Activated B cell treated with CpG ODN at 0.5 μM for 24 hours (primary cell): ENCODE measurements at regions of chr4 and their contacts with region 1.

Region 1: DNA sequence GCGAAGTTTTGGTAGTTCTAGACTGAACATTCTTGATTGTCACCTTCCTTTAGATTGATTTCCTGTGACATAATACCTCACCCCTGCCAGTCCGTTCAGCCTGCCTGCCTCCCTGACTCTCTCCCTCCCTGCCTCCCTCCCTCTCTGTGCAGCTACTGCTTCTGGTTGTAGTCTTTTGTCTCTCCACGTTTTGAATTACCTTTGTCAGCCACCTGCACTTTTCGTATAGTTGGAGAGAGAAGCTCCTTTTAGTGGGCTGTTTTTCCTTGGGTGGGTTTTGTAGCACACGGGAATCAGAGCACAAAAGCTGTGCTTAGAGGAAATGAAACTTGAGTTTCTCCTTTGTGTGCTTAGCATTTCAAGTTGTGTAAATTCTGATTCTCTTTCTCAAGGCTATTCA is 32.6 kb upstream of the MSMO1 start:
- DNase-seq: no peak
- ATAC-seq: peak; percentile 93
- H3K4me3 Mint-ChIP-seq: peak overlapping the region; percentile 82
- H3K27ac Mint-ChIP-seq: peak overlapping the region; percentile 91
- H3K4me1 Mint-ChIP-seq: peaks cover 34% of the 10 kb centered on the region
- H3K27me3 Mint-ChIP-seq: no peaks in the 10 kb centered on the region
- CTCF ChIP-seq: no peak

Region 2: DNA sequence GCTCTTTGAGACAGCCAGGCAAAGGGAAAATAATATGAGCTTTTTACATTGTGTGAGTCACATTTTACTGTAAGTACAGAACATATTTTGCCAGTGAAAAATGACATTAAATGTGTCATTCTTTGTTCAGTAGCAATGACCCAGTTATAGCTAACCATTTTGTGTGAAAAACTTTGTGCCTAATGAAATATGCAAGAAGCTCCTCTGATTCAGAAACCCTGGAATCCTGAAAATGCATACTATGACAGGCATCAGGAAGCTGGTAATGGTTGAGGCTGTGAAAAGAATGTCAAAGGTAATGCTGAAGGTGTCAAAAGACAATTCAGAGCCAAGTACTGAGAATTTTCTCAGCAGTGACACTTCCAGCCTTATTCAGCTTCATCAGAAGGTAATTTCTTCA is 1090.5 kb before region 1 on chr4:
- CTCF ChIA-PET with region 1: no interaction called
- POLR2A ChIA-PET with region 1: no interaction called
- intact Hi-C with region 1: no loop called
- DNase-seq: no peak
- ATAC-seq: no peak
- H3K4me3 Mint-ChIP-seq: no peak overlapping the region
- H3K27ac Mint-ChIP-seq: no peak overlapping the region
- H3K4me1 Mint-ChIP-seq: no peaks in the 10 kb centered on the region
- H3K27me3 Mint-ChIP-seq: no peaks in the 10 kb centered on the region
- CTCF ChIP-seq: no peak

Region 3: DNA sequence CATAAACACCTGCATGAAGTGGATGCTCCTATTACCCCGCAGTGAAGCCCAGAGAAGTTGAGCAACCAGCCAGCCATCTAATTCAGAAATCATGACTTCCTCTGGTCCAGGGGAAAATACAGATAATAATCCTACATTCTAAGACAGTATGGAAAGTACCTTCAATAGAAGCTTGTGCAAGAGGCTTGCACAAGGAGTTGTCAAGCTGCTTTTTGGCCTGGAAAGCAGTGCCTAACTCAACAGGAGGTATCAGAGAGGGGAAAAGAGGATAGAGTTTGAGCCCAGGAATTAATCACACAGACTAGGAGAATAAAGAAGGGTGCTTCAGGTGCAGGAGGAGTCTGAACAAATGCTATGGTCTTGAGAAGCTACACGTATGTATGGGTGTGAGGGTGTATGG is 209.0 kb before region 1 on chr4:
- CTCF ChIA-PET with region 1: no interaction called
- POLR2A ChIA-PET with region 1: no interaction called
- intact Hi-C with region 1: no loop called
- DNase-seq: no peak
- ATAC-seq: no peak
- H3K4me3 Mint-ChIP-seq: no peak overlapping the region
- H3K27ac Mint-ChIP-seq: no peak overlapping the region
- H3K4me1 Mint-ChIP-seq: no peaks in the 10 kb centered on the region
- H3K27me3 Mint-ChIP-seq: no peaks in the 10 kb centered on the region
- CTCF ChIP-seq: no peak

Region 4: GRCh38 chr4:165207431-165208220 is 87.3 kb before region 1 on chr4 and contains the start of gene KLHL2:
- CTCF ChIA-PET with region 1: no interaction called
- POLR2A ChIA-PET with region 1: no interaction called
- intact Hi-C with region 1: loop called (anchors 1 kb)
- DNase-seq: peak; percentile 76
- ATAC-seq: peak; percentile 90
- H3K4me3 Mint-ChIP-seq: peak within 1 kb of the TSS; percentile 94
- H3K27ac Mint-ChIP-seq: peak within 1 kb of the TSS; percentile 91
- H3K4me1 Mint-ChIP-seq: peaks cover 73% of the 10 kb centered on the region
- H3K27me3 Mint-ChIP-seq: no peaks in the 10 kb centered on the region
- CTCF ChIP-seq: no peak
- total RNA-seq, gene KLHL2: 21.5 and 21.9 TPM in 2 replicates

Region 5: DNA sequence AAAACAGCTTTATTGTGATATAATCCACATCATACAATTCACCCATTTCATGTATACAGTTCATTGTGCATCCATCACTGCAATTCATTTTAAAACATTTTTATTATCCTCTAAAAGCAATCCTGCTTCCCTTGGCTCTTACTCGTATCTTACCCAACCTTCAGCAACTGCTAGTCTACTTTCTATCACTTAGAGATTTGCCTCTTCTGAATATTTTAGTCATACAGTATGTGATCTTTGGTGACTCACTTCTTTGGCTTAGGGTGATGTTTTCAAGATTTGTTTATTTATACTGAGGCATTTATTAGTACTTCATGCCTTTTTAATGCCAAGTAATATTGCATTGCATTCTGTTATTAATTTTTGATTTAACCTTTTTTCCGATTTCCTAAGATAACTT is 17.6 kb after region 1 on chr4:
- CTCF ChIA-PET with region 1: no interaction called
- POLR2A ChIA-PET with region 1: no interaction called
- intact Hi-C with region 1: loop called (anchors 2 kb)
- DNase-seq: no peak
- ATAC-seq: no peak
- H3K4me3 Mint-ChIP-seq: no peak overlapping the region
- H3K27ac Mint-ChIP-seq: no peak overlapping the region
- H3K4me1 Mint-ChIP-seq: no peaks in the 10 kb centered on the region
- H3K27me3 Mint-ChIP-seq: no peaks in the 10 kb centered on the region
- CTCF ChIP-seq: no peak

Region 6: DNA sequence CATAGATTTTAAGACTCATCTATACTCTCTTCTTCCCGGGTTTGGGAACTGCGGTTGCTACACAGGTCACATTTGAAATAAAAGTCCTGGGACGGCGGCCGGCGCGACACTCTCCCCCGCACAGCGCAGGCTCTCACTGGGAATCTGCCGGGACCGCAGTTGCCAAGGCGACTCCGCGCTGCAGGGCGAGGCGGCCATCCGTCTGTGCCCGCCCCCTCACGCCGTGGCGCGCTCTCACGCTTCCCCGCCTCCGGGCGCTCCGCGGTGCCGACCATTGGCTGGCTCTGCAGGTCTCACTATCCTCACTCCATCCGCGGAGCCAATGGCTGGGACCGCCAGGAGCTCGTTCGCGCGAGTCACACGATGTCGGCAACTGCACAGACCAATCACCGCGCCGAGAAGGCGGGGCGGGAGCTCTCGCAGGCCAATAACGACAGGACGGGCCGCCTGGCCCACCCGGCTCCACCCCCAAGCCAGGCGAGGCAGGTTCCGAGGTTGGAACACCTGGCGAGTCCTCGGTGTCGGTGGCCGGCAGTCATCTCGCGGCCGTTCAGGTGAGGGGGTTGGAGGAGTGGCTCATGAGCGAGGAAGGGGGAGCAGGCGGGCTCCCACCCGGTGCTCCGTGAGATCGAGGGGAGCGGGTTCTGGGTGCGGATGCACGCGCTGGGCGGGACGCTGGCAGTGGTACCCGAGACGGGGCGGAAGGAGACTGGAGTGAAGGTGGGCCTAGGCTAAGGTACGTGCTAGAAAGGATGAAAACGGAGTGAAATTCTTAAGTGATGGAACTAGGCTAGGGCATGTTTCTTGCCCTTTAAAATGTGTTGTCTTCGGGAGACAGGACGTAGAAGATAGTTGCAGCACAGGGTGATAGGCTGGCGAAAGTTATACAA is 32.5 kb after region 1 on chr4 and contains the start of gene MSMO1:
- CTCF ChIA-PET with region 1: no interaction called
- POLR2A ChIA-PET with region 1: interaction called, 6 read pairs
- intact Hi-C with region 1: loop called (anchors 2 kb)
- DNase-seq: peak; percentile 92
- ATAC-seq: peak; percentile 96
- H3K4me3 Mint-ChIP-seq: no peak within 1 kb of the TSS
- H3K27ac Mint-ChIP-seq: no peak within 1 kb of the TSS
- H3K4me1 Mint-ChIP-seq: peaks cover 40% of the 10 kb centered on the region
- H3K27me3 Mint-ChIP-seq: no peaks in the 10 kb centered on the region
- CTCF ChIP-seq: no peak
- total RNA-seq, gene MSMO1: 74.6 and 87.9 TPM in 2 replicates

Region 7: DNA sequence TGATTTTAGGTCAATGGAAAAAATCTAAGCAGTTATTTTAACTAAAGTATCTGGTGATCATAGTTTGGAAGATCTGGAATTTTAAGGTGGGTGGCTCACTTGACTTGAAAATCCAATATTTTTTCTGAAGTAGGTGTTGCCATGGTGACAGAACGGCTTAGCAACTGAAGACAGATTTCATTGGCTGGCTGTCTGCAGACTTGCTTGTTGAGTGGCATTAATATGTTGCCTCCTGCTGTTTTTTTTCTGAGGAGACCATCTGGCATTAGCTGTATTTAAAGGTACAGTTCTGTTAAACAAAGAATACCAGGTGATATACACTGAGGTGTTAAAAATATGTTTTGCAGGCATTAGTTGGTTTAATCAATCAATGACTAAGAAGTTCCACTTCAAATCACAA is 103.7 kb after region 1 on chr4:
- CTCF ChIA-PET with region 1: no interaction called
- POLR2A ChIA-PET with region 1: no interaction called
- intact Hi-C with region 1: no loop called
- DNase-seq: no peak
- ATAC-seq: no peak
- H3K4me3 Mint-ChIP-seq: no peak overlapping the region
- H3K27ac Mint-ChIP-seq: no peak overlapping the region
- H3K4me1 Mint-ChIP-seq: no peaks in the 10 kb centered on the region
- H3K27me3 Mint-ChIP-seq: peaks cover 3% of the 10 kb centered on the region
- CTCF ChIP-seq: no peak